ENCODE measurements at regions of chr11 and their contacts with region 1.

Region 1: DNA sequence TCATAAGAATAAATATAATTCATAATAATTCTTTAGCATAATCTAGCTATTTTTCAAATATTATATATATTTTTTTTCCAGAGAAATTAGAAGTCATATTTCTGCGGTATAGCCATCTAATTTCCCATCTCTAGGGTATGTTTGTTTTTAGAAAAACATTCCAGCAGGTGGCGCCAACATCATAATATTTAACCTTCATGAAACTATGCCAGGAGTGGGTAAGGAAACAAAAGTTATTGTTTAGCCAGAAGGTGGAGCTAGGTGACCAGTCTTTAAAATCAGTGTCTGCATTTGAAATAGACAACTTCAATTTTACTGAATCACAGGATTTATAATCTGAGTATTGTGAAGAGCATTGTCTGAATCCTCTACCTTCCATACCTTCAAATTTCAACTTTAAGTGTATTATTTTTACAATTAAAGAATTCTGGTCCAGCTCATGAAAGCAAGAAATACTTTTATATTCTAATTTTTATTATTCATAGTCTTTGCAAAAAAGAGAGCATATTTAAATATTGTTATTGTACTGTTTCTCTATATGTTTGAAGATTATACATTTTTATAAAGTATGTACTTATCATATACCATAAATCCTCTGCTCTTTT is 15.7 kb upstream of the CCDC179 start:
- DNase-seq: peak; percentile 84
- H3K4me3 ChIP-seq: no peak overlapping the region
- H3K27ac ChIP-seq: no peak overlapping the region
- H3K4me1 ChIP-seq: no peaks in the 10 kb centered on the region
- H3K27me3 ChIP-seq: no peaks in the 10 kb centered on the region
- CTCF ChIP-seq: peak; percentile 78

Region 2: GRCh38 chr11:22677153-22677903 is 198.6 kb before region 1 on chr11:
- CTCF ChIA-PET with region 1: no interaction called
- POLR2A ChIA-PET with region 1: no interaction called
- intact Hi-C with region 1: no loop called
- DNase-seq: no peak
- H3K4me3 ChIP-seq: no peak overlapping the region
- H3K27ac ChIP-seq: no peak overlapping the region
- H3K4me1 ChIP-seq: no peaks in the 10 kb centered on the region
- H3K27me3 ChIP-seq: no peaks in the 10 kb centered on the region
- CTCF ChIP-seq: no peak

Region 3: GRCh38 chr11:22807855-22808570 is 68.0 kb before region 1 on chr11:
- CTCF ChIA-PET with region 1: no interaction called
- POLR2A ChIA-PET with region 1: no interaction called
- intact Hi-C with region 1: loop called (anchors 2 kb)
- DNase-seq: peak; percentile 71
- H3K4me3 ChIP-seq: no peak overlapping the region
- H3K27ac ChIP-seq: peak overlapping the region; percentile 18
- H3K4me1 ChIP-seq: peaks cover 17% of the 10 kb centered on the region
- H3K27me3 ChIP-seq: no peaks in the 10 kb centered on the region
- CTCF ChIP-seq: no peak